ENCODE measurements at regions of chr17 and their contacts with region 1.

Region 1: GRCh38 chr17:79393358-79394202 is 217.3 kb downstream of the RBFOX3 start:
- DNase-seq: peak; percentile 40
- ATAC-seq: peak; percentile 95
- H3K4me3 ChIP-seq: no peak overlapping the region
- H3K27ac ChIP-seq: no peak overlapping the region
- H3K4me1 ChIP-seq: no peaks in the 10 kb centered on the region
- H3K27me3 ChIP-seq: peaks cover 18% of the 10 kb centered on the region; the same call in 1 of the 2 replicates
- CTCF ChIP-seq: peak; percentile 88
- POLR2A ChIP-seq: no peak
- RAD21 ChIP-seq: peak; percentile 85

Region 2: GRCh38 chr17:78865682-78866390 is 527.7 kb before region 1 on chr17:
- CTCF ChIA-PET with region 1: no interaction called
- POLR2A ChIA-PET with region 1: no interaction called
- dilution Hi-C with region 1: no loop called
- in situ Hi-C with region 1: loop called (anchors 25 kb)
- intact Hi-C with region 1: no loop called
- DNase-seq: peak; percentile 80
- ATAC-seq: peak; percentile 48
- H3K4me3 ChIP-seq: no peak overlapping the region
- H3K27ac ChIP-seq: peak overlapping the region; percentile 21; the same call in 1 of the 2 replicates
- H3K4me1 ChIP-seq: peaks cover 18% of the 10 kb centered on the region
- H3K27me3 ChIP-seq: no peaks in the 10 kb centered on the region
- CTCF ChIP-seq: peak; percentile 81
- POLR2A ChIP-seq: no peak
- RAD21 ChIP-seq: peak; percentile 84

Region 3: DNA sequence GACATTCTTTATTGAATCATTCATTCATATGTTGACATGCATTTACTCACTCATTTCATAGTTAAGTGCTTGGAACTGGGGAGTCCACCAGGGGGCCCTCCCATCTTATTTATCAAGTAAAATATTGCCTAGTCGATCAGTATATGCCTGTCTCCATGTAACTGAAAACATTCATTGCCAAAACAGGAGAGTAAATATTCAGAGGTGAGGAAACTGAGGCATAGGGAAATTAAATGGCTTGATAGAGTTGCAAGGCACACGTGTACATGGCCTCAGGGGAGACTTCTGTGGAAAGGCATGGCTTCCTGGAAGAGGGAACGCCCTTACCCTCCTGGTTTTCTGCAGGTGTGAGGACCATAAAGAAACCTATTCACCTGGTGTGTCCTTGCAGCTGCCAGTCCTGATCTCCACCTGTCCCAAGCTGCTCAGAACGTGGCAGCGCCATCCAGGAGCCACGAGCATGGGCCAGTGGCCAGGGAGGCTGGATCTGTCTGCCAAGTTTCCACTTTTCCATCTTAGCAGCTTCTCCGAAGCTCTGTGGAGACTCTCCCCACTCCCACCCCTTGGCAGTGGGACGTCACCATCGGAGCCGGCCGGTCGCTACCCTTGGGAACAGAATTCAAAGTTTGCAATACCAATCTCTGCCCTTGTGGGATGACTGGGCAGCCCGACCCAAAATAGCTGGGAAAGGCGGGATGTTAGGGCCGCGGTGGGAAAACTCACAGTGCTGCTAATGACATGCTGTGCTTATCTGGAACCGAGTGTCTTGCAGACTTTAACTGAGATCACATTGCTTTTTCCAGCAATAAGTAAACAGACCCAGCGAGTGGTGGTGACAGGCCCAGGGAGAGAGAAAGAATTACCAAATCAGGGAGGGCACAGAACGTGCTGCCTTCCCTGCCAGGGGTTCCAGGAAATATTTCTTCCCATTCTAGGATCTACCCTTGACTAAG is 373.7 kb before region 1 on chr17:
- CTCF ChIA-PET with region 1: interaction called, 3 read pairs
- POLR2A ChIA-PET with region 1: no interaction called
- dilution Hi-C with region 1: no loop called
- in situ Hi-C with region 1: loop called (anchors 10 kb)
- intact Hi-C with region 1: loop called (anchors 1 kb)
- DNase-seq: peak; percentile 78
- ATAC-seq: peak; percentile 68
- H3K4me3 ChIP-seq: no peak overlapping the region
- H3K27ac ChIP-seq: no peak overlapping the region
- H3K4me1 ChIP-seq: peaks cover 15% of the 10 kb centered on the region
- H3K27me3 ChIP-seq: peaks cover 2% of the 10 kb centered on the region; the same call in 1 of the 2 replicates
- CTCF ChIP-seq: peak; percentile 89
- POLR2A ChIP-seq: no peak
- RAD21 ChIP-seq: peak; percentile 84

Region 4: DNA sequence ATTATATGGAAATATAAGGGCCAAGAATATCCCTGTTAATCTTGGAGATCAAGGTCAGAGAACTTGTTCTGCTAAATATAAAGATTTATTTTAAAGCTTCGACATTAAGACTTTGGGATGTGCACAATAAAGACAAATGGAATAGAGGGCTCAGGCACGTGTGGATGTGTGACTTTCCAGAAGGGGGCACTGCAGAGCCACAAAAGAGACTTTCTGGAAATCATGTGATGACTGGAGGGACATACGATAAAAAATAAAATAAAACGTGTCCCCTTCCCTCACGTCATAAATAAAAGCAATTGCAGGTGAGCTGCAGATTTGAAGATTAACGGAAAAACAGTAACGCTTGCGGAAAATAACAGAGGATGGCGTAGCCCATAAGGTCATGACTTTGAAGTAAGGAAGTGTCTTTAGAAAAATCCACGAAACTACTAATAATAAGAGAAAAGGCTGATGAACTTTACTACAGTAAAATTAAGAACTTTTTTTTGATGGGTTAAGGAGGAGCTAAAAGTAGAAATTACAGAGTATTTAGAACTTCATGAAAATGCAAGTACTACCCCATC is 328.4 kb before region 1 on chr17:
- CTCF ChIA-PET with region 1: interaction called, 6 read pairs
- POLR2A ChIA-PET with region 1: no interaction called
- dilution Hi-C with region 1: no loop called
- in situ Hi-C with region 1: no loop called
- intact Hi-C with region 1: loop called (anchors 5 kb)
- DNase-seq: peak; percentile 32
- ATAC-seq: peak; percentile 83; the same call in 1 of the 2 replicates
- H3K4me3 ChIP-seq: no peak overlapping the region
- H3K27ac ChIP-seq: no peak overlapping the region
- H3K4me1 ChIP-seq: no peaks in the 10 kb centered on the region
- H3K27me3 ChIP-seq: peaks cover 19% of the 10 kb centered on the region
- CTCF ChIP-seq: peak; percentile 61
- POLR2A ChIP-seq: no peak
- RAD21 ChIP-seq: peak; percentile 54

Region 5: DNA sequence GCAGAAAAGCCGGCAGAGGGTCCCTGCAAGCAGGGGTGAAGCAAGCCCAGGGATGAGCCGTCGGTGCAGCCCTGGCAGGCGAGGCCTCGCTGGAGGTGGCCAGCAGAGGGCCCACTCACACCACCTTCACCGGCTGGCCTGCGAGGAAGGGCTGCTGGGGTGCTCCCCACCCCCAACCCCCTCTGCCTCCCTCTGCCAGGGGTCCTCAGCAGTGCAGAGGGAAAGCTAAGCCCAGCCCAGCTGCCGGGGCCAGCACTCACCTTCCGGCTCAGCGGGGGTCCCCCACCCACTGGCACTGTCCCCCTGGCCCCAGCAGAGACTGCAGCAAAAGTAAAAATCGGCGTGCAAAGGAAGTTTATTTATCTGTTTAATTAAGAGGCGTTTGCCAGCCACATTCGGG is 205.5 kb before region 1 on chr17:
- CTCF ChIA-PET with region 1: interaction called, 5 read pairs
- POLR2A ChIA-PET with region 1: no interaction called
- dilution Hi-C with region 1: no loop called
- in situ Hi-C with region 1: no loop called
- intact Hi-C with region 1: loop called (anchors 1 kb)
- DNase-seq: no peak
- ATAC-seq: peak; percentile 79
- H3K4me3 ChIP-seq: no peak overlapping the region
- H3K27ac ChIP-seq: no peak overlapping the region
- H3K4me1 ChIP-seq: no peaks in the 10 kb centered on the region
- H3K27me3 ChIP-seq: peaks cover 46% of the 10 kb centered on the region
- CTCF ChIP-seq: peak; percentile 45
- POLR2A ChIP-seq: no peak
- RAD21 ChIP-seq: peak; percentile 58

Region 6: GRCh38 chr17:79408251-79408650 is 14.7 kb after region 1 on chr17:
- CTCF ChIA-PET with region 1: no interaction called
- POLR2A ChIA-PET with region 1: no interaction called
- dilution Hi-C with region 1: no loop called
- in situ Hi-C with region 1: no loop called
- intact Hi-C with region 1: no loop called
- DNase-seq: no peak
- ATAC-seq: no peak
- H3K4me3 ChIP-seq: no peak overlapping the region
- H3K27ac ChIP-seq: no peak overlapping the region
- H3K4me1 ChIP-seq: no peaks in the 10 kb centered on the region
- H3K27me3 ChIP-seq: peaks cover 29% of the 10 kb centered on the region
- CTCF ChIP-seq: no peak
- POLR2A ChIP-seq: no peak
- RAD21 ChIP-seq: no peak

Region 7: GRCh38 chr17:79618383-79619067 is 224.9 kb after region 1 on chr17:
- CTCF ChIA-PET with region 1: no interaction called
- POLR2A ChIA-PET with region 1: no interaction called
- dilution Hi-C with region 1: no loop called
- in situ Hi-C with region 1: no loop called
- intact Hi-C with region 1: no loop called
- DNase-seq: no peak
- ATAC-seq: no peak
- H3K4me3 ChIP-seq: no peak overlapping the region
- H3K27ac ChIP-seq: no peak overlapping the region
- H3K4me1 ChIP-seq: no peaks in the 10 kb centered on the region
- H3K27me3 ChIP-seq: peaks cover 29% of the 10 kb centered on the region
- CTCF ChIP-seq: no peak
- POLR2A ChIP-seq: no peak
- RAD21 ChIP-seq: no peak

Region 8: DNA sequence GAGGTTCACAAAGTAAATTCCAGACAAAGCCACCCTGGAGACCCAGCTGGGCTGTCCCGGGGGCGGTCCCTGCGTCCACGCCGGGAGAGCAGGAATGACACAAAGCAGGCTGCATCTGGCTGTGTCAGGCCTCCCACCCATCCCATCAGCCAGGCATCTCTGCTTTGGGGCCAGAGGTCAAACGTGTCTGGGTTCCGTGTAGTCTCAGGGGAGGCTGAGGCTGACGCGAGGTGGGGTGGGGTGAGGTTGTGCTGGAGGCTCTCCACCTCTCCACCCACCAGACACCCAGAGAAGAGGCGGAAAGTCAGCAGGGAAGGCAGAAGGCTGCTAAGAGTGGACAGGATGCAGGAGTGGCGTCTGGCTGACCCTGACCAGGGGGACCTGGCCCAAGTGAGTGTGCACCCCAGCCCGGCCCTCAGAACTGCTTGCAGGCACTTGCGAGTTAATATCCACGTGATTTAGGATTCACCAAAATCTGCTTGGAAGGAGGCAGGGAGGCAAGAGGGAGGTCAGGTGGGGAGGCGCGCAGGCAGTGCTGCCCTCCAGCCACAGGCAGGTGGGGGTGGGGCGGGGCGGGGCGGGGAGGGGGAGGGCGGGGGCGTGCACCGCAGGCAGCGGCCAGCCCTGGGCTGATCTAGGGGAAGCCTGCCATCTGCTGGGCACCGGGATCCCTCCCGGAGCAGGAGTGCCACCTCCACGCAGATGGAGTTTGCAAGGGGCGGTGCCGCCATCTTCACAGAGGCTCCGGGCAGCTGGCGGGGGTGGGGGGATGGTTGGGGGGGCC is 597.8 kb after region 1 on chr17:
- CTCF ChIA-PET with region 1: no interaction called
- POLR2A ChIA-PET with region 1: no interaction called
- dilution Hi-C with region 1: no loop called
- in situ Hi-C with region 1: no loop called
- intact Hi-C with region 1: loop called (anchors 5 kb)
- DNase-seq: peak; percentile 74
- ATAC-seq: peak; percentile 73
- H3K4me3 ChIP-seq: peak overlapping the region; percentile 9; the same call in 1 of the 2 replicates
- H3K27ac ChIP-seq: no peak overlapping the region
- H3K4me1 ChIP-seq: peaks cover 41% of the 10 kb centered on the region
- H3K27me3 ChIP-seq: no peaks in the 10 kb centered on the region
- CTCF ChIP-seq: peak; percentile 71
- POLR2A ChIP-seq: no peak
- RAD21 ChIP-seq: peak; percentile 77

Measured in IMR-90 (cell line).